ENCODE measurements at regions of chr18 and their contacts with region 1.

Region 1: DNA sequence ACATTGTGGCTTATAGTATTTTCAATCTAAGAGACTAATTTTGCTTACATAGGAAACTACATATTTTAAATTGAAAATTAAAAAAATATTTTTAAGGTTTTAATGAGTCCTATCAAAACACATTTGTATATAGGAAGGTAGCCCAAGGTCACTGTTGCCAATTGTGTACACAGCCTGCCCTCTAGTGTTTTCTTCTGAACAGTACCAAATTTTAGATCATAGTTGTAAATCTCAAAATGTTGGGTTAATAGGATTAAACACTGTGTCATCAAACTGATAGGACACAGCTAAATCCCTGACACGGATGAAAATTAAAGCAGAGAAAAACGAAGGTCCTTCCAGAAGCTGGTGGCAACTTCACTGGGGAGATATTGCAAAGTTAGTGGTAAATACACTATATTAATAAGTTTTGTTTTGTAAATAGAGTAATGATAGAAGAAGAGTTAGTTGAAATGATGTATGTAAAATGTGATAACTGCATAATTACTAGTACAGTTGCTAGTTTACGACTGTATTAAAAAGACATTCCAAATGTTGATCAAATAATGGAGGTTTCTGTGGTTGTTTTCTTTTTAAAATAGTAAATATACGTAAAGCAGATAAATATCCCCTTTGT is 19.7 kb downstream of the CLUL1 start:
- DNase-seq: peak in 1 of 4 donors; percentile 57
- ATAC-seq: peak; percentile 88
- H3K4me3 ChIP-seq: no peak overlapping the region
- H3K27ac ChIP-seq: no peak overlapping the region
- H3K4me1 ChIP-seq: peaks cover 3 to 17% of the 10 kb centered on the region in 2 donors
- H3K27me3 ChIP-seq: no peaks in the 10 kb centered on the region
- CTCF ChIP-seq: peak; percentile 40 to 71

Region 2: DNA sequence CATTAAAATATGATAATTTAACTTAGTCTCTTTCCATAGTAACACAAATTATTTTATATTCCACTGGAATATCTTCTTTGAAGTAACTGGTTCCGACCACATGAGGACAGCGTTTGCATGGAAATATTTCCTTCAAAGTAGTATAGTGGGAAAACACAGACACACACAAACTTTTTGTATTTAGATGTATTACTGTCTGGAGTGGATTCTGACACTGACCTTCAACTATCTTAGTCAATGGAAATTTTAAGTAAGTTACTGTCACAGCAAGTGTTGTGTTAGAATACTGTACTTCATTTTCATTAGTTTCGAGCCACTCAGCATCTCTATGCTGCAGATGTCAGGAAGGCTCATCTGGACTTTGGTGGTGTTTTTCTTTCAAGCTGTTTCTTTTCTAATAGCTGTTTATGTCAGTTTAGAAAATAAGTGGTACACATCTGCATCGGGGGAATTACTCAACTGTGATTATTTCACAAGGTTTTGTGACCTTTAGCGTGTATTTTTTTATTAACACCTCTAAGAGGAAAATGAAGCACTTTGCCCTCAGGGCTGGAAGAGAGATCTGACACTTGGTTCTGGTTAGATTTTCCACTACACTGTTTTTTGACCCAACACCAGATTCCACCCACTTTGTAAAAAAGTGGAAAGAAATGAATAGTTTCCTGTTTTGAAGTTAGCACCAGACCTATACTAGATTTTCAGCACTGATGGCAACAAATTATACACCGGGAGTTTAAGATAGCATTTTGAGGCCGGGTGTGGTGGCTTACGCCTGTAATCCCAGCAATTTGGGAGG is 329.8 kb before region 1 on chr18:
- intact Hi-C with region 1: loop called in 1 of 2 experiments (anchors 5 kb)
- DNase-seq: peak in 1 of 4 donors; percentile 40
- ATAC-seq: peak; percentile 69
- H3K4me3 ChIP-seq: no peak overlapping the region
- H3K27ac ChIP-seq: no peak overlapping the region
- H3K4me1 ChIP-seq: no peaks in the 10 kb centered on the region
- H3K27me3 ChIP-seq: no peaks in the 10 kb centered on the region
- CTCF ChIP-seq: peak in 1 of 2 donors; percentile 37

Measured in left lung (tissue), 14 donors.